OCI-LY7 (cell line): ENCODE measurements at regions of chr17 and their contacts with region 1.

Region 1: DNA sequence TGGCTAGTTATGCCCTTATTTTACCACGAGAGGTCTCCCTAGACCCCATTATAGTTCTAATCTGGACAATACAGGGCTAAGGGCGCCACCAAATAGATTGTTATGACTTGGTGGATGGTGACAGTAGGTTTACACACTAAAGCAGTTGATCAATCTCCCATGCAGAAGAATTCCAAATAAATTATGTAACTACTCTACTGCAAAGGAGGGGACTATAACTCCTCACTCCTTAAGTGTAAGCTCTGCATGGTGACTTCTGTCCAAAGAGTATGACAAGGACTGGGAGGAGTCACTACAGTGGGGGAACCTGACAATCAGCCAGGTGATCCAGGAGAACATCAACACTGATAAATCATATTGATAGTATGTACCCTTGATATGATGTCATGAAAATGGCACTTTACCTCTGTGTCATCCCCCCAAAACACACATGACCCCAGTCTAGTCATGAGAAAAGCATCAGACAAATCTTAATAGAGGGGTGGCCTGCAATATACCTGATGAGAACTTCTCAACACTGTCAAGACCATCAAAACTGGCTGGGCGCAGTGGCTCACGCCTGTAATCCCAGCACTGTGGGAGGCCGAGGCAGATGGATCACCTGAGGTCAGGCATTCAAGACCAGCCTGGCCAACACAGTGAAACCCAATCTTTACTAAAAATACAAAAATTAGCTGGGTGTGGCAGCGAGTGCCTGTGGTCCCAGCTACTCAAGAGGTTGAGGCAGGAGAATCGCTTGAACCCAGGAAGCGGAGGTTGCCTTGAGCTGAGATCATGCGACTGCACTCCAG is 20.1 kb upstream of the YPEL2 start:
- DNase-seq: peak; percentile 79
- H3K4me3 ChIP-seq: no peak overlapping the region
- H3K27ac ChIP-seq: no peak overlapping the region
- H3K4me1 ChIP-seq: no peaks in the 10 kb centered on the region
- CTCF ChIP-seq: peak; percentile 91

Region 2: GRCh38 chr17:59220376-59221158 is 90.8 kb before region 1 on chr17 and contains the start of gene GDPD1:
- CTCF ChIA-PET with region 1: no interaction called
- POLR2A ChIA-PET with region 1: no interaction called
- intact Hi-C with region 1: loop called (anchors 1 kb)
- DNase-seq: peak; percentile 97
- H3K4me3 ChIP-seq: peak within 1 kb of the TSS; percentile 80
- H3K27ac ChIP-seq: peak within 1 kb of the TSS; percentile 69
- H3K4me1 ChIP-seq: peaks cover 15% of the 10 kb centered on the region
- CTCF ChIP-seq: peak; percentile 77
- total RNA-seq, gene GDPD1: 0.51 and 1.3 TPM in 2 replicates

Region 3: GRCh38 chr17:59440784-59441441 is 129.6 kb after region 1 on chr17:
- CTCF ChIA-PET with region 1: interaction called, 5 read pairs
- POLR2A ChIA-PET with region 1: interaction called, 9 read pairs
- intact Hi-C with region 1: loop called (anchors 1 kb)
- DNase-seq: peak; percentile 90
- H3K4me3 ChIP-seq: no peak overlapping the region
- H3K27ac ChIP-seq: no peak overlapping the region
- H3K4me1 ChIP-seq: peaks cover 37% of the 10 kb centered on the region
- CTCF ChIP-seq: peak; percentile 95

Region 4: DNA sequence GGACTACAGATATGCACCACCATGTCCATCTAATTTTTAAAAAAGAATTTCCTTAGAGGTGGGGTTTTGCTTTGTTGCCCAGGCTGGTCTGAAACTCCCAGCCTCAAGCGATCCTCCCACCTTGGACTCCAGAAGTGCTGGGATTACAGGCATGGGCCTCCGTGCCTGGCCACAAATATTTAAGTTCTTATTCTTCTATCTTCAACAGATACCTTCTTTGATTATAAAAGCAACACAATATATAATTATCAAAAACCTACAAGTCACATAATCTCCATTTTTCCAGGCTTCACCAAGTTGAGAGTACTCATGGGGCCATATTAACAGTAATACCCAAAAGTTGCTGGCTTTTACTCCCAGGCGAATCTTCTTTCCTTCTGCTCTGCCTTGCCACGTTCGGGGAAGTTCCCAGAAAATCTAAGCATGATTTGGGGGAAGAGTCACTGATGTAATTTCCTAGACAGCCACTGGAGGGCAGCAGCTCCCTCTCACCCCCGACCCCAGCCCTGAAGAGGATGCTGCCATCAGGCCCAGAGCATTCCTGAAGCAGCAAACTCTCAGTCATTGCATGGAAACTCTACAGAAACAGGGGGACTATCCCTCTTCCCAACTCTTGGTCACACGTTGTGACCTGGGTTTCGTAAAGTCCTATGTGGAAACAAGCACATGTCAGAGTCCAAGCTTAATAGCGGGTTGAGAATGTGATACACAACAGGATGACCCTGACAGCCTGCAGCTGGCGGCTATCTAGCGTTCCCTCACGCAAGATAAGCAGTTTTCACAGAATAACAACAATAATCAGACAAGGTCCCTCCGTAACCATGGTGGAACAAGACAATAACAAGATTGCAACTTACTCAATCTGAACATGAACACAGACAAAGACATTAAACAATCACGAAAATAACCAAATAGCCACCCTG is 210.1 kb after region 1 on chr17:
- CTCF ChIA-PET with region 1: no interaction called
- POLR2A ChIA-PET with region 1: no interaction called
- intact Hi-C with region 1: loop called (anchors 5 kb)
- DNase-seq: peak; percentile 60
- H3K4me3 ChIP-seq: no peak overlapping the region
- H3K27ac ChIP-seq: no peak overlapping the region
- H3K4me1 ChIP-seq: no peaks in the 10 kb centered on the region
- CTCF ChIP-seq: peak; percentile 95

Region 5: GRCh38 chr17:60036796-60037612 is 725.7 kb after region 1 on chr17:
- CTCF ChIA-PET with region 1: no interaction called
- POLR2A ChIA-PET with region 1: no interaction called
- intact Hi-C with region 1: loop called (anchors 5 kb)
- DNase-seq: peak; percentile 82
- H3K4me3 ChIP-seq: no peak overlapping the region
- H3K27ac ChIP-seq: no peak overlapping the region
- H3K4me1 ChIP-seq: peaks cover 5% of the 10 kb centered on the region
- CTCF ChIP-seq: peak; percentile 99